Motor neuron (in vitro differentiated cells): ENCODE measurements at regions of chr2 and their contacts with region 1.

Region 1: GRCh38 chr2:68031542-68032160 is 31.2 kb downstream of the C1D start:
- ATAC-seq: peak in 6 of 8 experiments; percentile 38 to 64 (median 49)
- H3K4me3 ChIP-seq: no peak overlapping the region
- H3K27ac ChIP-seq: no peak overlapping the region
- H3K4me1 ChIP-seq: peaks cover 0 to 6% of the 10 kb centered on the region in 2 donors

Region 2: DNA sequence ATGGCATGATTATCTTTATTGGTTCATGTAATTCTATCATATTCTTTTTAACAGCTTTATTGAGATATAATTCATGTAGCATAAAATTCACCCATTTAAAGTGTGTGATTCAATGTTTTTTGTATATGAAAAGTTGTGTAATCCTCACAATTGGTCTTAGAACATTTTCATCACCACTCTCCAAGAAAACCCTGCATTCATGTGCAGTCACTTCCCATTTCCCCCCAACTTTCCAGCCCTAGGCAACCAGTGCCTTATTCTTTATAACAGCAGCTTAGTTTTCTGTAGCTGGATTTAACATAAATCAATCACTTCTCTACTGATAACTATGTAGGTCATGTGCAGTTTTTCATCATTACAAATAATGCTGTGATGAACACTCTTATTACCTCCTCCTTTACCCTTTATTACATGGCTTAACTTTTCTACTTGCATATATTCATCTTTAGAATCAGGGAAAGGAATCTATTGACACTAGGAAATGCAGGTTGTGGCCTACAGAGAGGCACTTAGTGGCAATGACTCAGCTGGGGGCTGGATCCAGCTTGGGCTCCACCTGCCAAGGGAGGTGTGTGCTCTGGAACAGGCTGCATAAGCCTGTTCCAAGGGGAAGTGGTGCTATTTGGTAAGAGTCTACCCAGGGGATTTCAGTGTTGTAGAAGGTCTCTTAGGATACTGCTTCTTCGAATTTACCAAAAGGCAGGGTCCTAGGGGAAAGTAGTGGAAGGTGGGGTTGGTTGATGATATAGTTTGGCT is 545.4 kb before region 1 on chr2:
- in situ Hi-C with region 1: no loop called
- ATAC-seq: peak in 5 of 8 experiments; percentile 46 to 97 (median 60)
- H3K4me3 ChIP-seq: no peak overlapping the region
- H3K27ac ChIP-seq: no peak overlapping the region
- H3K4me1 ChIP-seq: peaks cover 9 to 11% of the 10 kb centered on the region in 2 donors

Region 3: GRCh38 chr2:67854798-67855197 is 176.9 kb before region 1 on chr2:
- in situ Hi-C with region 1: loop called in 1 of 9 experiments (anchors 10 kb)
- ATAC-seq: no peak
- H3K4me3 ChIP-seq: no peak overlapping the region
- H3K27ac ChIP-seq: no peak overlapping the region
- H3K4me1 ChIP-seq: peaks cover 0 to 12% of the 10 kb centered on the region in 2 donors

Region 4: DNA sequence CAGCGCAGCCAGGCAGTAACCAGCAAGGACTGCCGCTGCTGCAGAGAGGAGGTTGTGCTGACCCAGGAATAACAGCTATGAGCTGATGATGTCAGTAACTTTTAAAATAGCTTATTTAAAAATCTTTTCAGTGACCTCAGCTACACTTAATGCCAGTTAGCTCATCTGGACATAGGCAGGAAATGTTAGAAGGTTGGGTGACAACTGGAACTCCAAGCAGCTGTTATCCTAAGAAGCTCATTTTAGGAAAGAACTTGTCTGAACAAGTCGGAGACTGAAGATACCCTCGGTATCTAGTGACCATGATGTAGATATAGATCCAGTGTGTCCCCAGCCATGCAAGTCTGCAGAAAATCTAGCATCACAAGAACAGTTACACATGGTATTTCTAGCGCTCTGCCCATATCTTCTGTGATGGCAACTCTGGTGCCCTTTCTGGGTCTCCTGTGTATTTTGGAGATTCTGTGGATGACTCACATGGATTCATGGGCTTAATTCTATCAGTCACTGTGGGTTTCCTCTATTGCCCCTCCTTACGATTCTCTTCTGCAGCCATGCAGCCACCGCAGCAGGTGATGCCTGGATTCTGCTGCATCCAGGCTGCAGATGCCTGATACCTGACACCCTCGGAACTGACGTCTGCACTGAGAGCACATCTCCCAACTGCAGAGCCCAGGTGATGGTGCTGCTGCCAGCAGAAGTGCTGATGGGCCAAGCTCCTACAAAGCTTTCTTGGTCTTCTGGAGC is 313.7 kb after region 1 on chr2:
- in situ Hi-C with region 1: no loop called
- ATAC-seq: peak in 2 of 8 experiments; percentile 30 to 37
- H3K4me3 ChIP-seq: no peak overlapping the region
- H3K27ac ChIP-seq: no peak overlapping the region
- H3K4me1 ChIP-seq: peaks cover 7 to 10% of the 10 kb centered on the region in 2 donors